ENCODE measurements at regions of chr14 and their contacts with region 1.

Region 1: GRCh38 chr14:74612350-74613021 is 449 bp upstream of the LTBP2 start:
- DNase-seq: no peak
- ATAC-seq: peak; percentile 87
- H3K4me3 ChIP-seq: peak overlapping the region; percentile 63
- H3K27ac ChIP-seq: no peak overlapping the region
- H3K4me1 ChIP-seq: peaks cover 15% of the 10 kb centered on the region
- H3K27me3 ChIP-seq: peaks cover 0 to 1% of the 10 kb centered on the region in 2 experiments; a peak in 2 of 4 replicates
- CTCF ChIP-seq: peak; percentile 59 to 65 (median 64); a peak in 5 of 6 replicates
- EP300 ChIP-seq: no peak
- POLR2A ChIP-seq: no peak
- RAD21 ChIP-seq: peak; percentile 40

Region 2: GRCh38 chr14:74362361-74362915 is 250.0 kb before region 1 on chr14:
- CTCF ChIA-PET with region 1: interaction called, 6 read pairs
- POLR2A ChIA-PET with region 1: no interaction called
- RAD21 ChIA-PET with region 1: no interaction called
- SMC1A ChIA-PET with region 1: interaction called, 4 read pairs
- in situ Hi-C with region 1: no loop called
- intact Hi-C with region 1: loop called (anchors 5 kb)
- DNase-seq: peak; percentile 21
- ATAC-seq: peak; percentile 91
- H3K4me3 ChIP-seq: no peak overlapping the region
- H3K27ac ChIP-seq: no peak overlapping the region
- H3K4me1 ChIP-seq: no peaks in the 10 kb centered on the region
- H3K27me3 ChIP-seq: peaks cover 3 to 4% of the 10 kb centered on the region in 2 experiments
- CTCF ChIP-seq: peak; percentile 93 to 98 (median 96)
- EP300 ChIP-seq: no peak
- POLR2A ChIP-seq: no peak
- RAD21 ChIP-seq: peak; percentile 90

Region 3: DNA sequence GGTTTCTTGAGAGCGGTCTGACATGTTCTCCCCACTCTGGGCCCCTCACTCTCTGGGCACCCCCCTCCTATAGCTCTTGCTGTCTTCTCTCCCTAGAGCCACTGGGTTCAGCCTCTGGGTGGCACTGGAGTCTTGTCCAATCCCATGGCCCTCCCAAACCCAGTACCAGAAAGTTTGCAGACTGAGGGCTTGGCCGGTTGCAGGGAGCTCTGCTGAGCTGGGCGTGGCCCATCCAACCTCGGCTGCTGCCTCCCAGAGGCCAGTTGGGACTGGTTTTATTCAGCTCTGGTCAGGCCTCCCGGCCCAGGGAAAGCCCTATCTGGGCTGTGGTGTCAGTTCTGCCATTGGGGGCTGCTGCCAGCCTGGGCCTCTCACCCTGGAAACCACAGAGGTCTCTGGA is 81.0 kb before region 1 on chr14:
- CTCF ChIA-PET with region 1: no interaction called
- POLR2A ChIA-PET with region 1: no interaction called
- RAD21 ChIA-PET with region 1: no interaction called
- SMC1A ChIA-PET with region 1: no interaction called
- in situ Hi-C with region 1: no loop called
- intact Hi-C with region 1: no loop called
- DNase-seq: no peak
- ATAC-seq: peak; percentile 65
- H3K4me3 ChIP-seq: no peak overlapping the region
- H3K27ac ChIP-seq: no peak overlapping the region
- H3K4me1 ChIP-seq: no peaks in the 10 kb centered on the region
- H3K27me3 ChIP-seq: no peaks in the 10 kb centered on the region; a peak in 2 of 4 replicates
- CTCF ChIP-seq: no peak
- EP300 ChIP-seq: no peak
- POLR2A ChIP-seq: no peak
- RAD21 ChIP-seq: no peak

Region 4: DNA sequence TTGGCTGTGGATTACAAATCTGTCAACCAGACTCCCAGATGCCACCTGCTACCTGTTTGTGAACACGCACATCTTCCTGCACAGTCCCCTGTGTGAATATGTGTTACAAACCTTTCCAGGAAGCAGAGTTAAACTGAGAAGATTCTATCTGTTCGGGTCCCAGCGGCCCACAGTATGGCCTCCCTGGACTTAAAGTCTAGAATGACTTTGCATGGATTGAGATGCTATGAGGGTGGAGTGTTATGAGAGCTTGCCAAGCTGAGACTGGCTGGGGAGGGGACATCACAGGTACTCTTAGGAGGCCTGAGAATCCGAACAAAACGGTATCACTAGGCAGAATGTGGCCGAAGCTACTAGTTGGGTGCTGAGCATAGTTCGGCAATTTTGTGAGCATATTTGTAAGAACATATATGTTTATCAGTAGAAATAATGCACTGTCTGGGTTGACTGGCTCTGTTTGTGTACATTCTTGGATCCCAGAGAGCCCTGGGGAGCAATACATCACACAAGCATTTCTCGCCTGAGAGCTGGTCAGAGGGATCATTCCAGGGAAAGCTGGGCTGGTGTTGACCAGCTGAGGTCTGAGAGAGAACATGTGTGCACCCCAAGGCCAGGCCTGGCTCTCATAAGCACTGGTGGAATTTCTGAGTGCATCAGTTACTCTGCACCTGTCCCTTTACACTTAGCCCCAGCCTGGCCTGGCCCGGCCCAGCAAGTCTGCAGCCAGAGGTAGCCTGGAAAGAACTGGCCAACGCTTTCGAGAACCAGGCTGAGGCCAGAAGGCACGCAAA is 29.3 kb after region 1 on chr14:
- CTCF ChIA-PET with region 1: interaction called, 14 read pairs
- POLR2A ChIA-PET with region 1: no interaction called
- RAD21 ChIA-PET with region 1: interaction called, 4 read pairs
- SMC1A ChIA-PET with region 1: interaction called, 7 read pairs
- in situ Hi-C with region 1: no loop called
- intact Hi-C with region 1: loop called (anchors 5 kb)
- DNase-seq: no peak
- ATAC-seq: no peak
- H3K4me3 ChIP-seq: no peak overlapping the region
- H3K27ac ChIP-seq: no peak overlapping the region
- H3K4me1 ChIP-seq: no peaks in the 10 kb centered on the region
- H3K27me3 ChIP-seq: no peaks in the 10 kb centered on the region; a peak in 2 of 4 replicates
- CTCF ChIP-seq: no peak
- EP300 ChIP-seq: no peak
- POLR2A ChIP-seq: no peak
- RAD21 ChIP-seq: no peak

Region 5: GRCh38 chr14:74784634-74785033 is 172.1 kb after region 1 on chr14:
- CTCF ChIA-PET with region 1: interaction called, 11 read pairs
- POLR2A ChIA-PET with region 1: no interaction called
- RAD21 ChIA-PET with region 1: interaction called, 3 read pairs
- SMC1A ChIA-PET with region 1: interaction called, 3 read pairs
- in situ Hi-C with region 1: no loop called
- intact Hi-C with region 1: no loop called
- DNase-seq: no peak
- ATAC-seq: no peak
- H3K4me3 ChIP-seq: no peak overlapping the region
- H3K27ac ChIP-seq: no peak overlapping the region
- H3K4me1 ChIP-seq: no peaks in the 10 kb centered on the region
- H3K27me3 ChIP-seq: no peaks in the 10 kb centered on the region
- CTCF ChIP-seq: no peak
- EP300 ChIP-seq: no peak
- POLR2A ChIP-seq: no peak
- RAD21 ChIP-seq: no peak

Region 6: GRCh38 chr14:74836251-74836960 is 223.9 kb after region 1 on chr14:
- CTCF ChIA-PET with region 1: interaction called, 13 read pairs
- POLR2A ChIA-PET with region 1: interaction called, 9 read pairs
- RAD21 ChIA-PET with region 1: interaction called, 3 read pairs
- SMC1A ChIA-PET with region 1: interaction called, 6 read pairs
- in situ Hi-C with region 1: no loop called
- intact Hi-C with region 1: no loop called
- DNase-seq: no peak
- ATAC-seq: no peak
- H3K4me3 ChIP-seq: no peak overlapping the region
- H3K27ac ChIP-seq: peak overlapping the region; percentile 60
- H3K4me1 ChIP-seq: peaks cover 56% of the 10 kb centered on the region
- H3K27me3 ChIP-seq: no peaks in the 10 kb centered on the region
- CTCF ChIP-seq: no peak
- EP300 ChIP-seq: no peak
- POLR2A ChIP-seq: no peak
- RAD21 ChIP-seq: no peak

Region 7: GRCh38 chr14:74905375-74906142 is 293.1 kb after region 1 on chr14:
- CTCF ChIA-PET with region 1: interaction called, 17 read pairs
- POLR2A ChIA-PET with region 1: no interaction called
- RAD21 ChIA-PET with region 1: interaction called, 10 read pairs
- SMC1A ChIA-PET with region 1: interaction called, 5 read pairs
- in situ Hi-C with region 1: no loop called
- intact Hi-C with region 1: no loop called
- DNase-seq: no peak
- ATAC-seq: peak; percentile 87
- H3K4me3 ChIP-seq: no peak overlapping the region
- H3K27ac ChIP-seq: no peak overlapping the region
- H3K4me1 ChIP-seq: peaks cover 4% of the 10 kb centered on the region; the same call in 1 of the 2 replicates
- H3K27me3 ChIP-seq: no peaks in the 10 kb centered on the region
- CTCF ChIP-seq: peak; percentile 88 to 96 (median 94)
- EP300 ChIP-seq: no peak
- POLR2A ChIP-seq: peak; percentile 66; the same call in 1 of the 2 replicates
- RAD21 ChIP-seq: peak; percentile 82